ENCODE measurements at regions of chr10 and their contacts with region 1.

Region 1: GRCh38 chr10:110610308-110610774 is 33.8 kb upstream of the RBM20 start:
- DNase-seq: peak; percentile 50
- ATAC-seq: peak; percentile 74
- H3K4me3 Mint-ChIP-seq: no peak overlapping the region
- H3K27ac Mint-ChIP-seq: peak overlapping the region; percentile 1
- H3K4me1 Mint-ChIP-seq: peaks cover 22% of the 10 kb centered on the region
- H3K27me3 Mint-ChIP-seq: no peaks in the 10 kb centered on the region
- CTCF ChIP-seq: peak; percentile 71

Region 2: DNA sequence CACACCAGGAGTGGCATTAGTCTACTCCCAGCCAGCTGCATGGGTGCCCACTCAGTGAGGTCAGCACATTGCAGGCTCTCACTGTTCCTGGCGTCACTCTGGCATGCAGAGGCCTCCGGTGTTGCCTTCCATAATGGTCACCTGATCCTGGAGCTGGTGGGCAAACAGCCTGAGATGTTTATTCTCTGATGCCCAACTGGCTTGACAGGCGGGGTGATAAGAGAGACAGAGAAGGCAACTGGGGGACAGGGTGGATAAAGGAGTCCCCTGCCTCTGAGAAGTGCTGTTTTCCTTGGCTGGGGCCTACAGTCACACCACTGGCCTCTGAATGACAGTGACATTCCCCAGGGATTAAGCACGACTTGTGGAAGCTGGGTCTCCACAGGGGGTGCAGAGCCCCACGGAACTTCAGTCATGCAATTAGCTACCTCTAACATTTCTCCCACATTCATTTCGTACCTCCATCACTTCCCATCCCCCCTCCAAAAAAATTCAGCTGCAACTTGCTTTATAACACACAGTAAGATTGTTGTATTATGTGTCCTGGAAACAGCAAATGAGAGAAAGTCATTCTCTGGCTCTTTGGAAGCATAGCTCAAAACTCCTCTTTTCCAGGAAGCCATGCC is 26.7 kb after region 1 on chr10:
- CTCF ChIA-PET with region 1: interaction called, 11 read pairs
- POLR2A ChIA-PET with region 1: no interaction called
- DNase-seq: no peak
- ATAC-seq: peak; percentile 22
- H3K4me3 Mint-ChIP-seq: no peak overlapping the region
- H3K27ac Mint-ChIP-seq: no peak overlapping the region
- H3K4me1 Mint-ChIP-seq: peaks cover 31% of the 10 kb centered on the region
- H3K27me3 Mint-ChIP-seq: peaks cover 10% of the 10 kb centered on the region
- CTCF ChIP-seq: no peak

Region 3: GRCh38 chr10:110643653-110644597 is 33.6 kb after region 1 on chr10 and contains the start of gene RBM20:
- CTCF ChIA-PET with region 1: interaction called, 11 read pairs
- POLR2A ChIA-PET with region 1: no interaction called
- DNase-seq: peak; percentile 55
- ATAC-seq: peak; percentile 53
- H3K4me3 Mint-ChIP-seq: peak within 1 kb of the TSS; percentile 80
- H3K27ac Mint-ChIP-seq: no peak within 1 kb of the TSS
- H3K4me1 Mint-ChIP-seq: peaks cover 31% of the 10 kb centered on the region
- H3K27me3 Mint-ChIP-seq: peaks cover 55% of the 10 kb centered on the region
- CTCF ChIP-seq: no peak
- total RNA-seq, gene RBM20: 0.37 to 0.52 TPM (median 0.41 TPM) in 3 replicates

Region 4: GRCh38 chr10:110671788-110672579 is 61.6 kb after region 1 on chr10:
- CTCF ChIA-PET with region 1: interaction called, 18 read pairs
- POLR2A ChIA-PET with region 1: no interaction called
- DNase-seq: peak; percentile 80
- ATAC-seq: peak; percentile 85
- H3K4me3 Mint-ChIP-seq: peak overlapping the region; percentile 66
- H3K27ac Mint-ChIP-seq: no peak overlapping the region
- H3K4me1 Mint-ChIP-seq: peaks cover 26% of the 10 kb centered on the region
- H3K27me3 Mint-ChIP-seq: peaks cover 77% of the 10 kb centered on the region
- CTCF ChIP-seq: peak; percentile 34; the same call in 1 of the 2 replicates

Region 5: DNA sequence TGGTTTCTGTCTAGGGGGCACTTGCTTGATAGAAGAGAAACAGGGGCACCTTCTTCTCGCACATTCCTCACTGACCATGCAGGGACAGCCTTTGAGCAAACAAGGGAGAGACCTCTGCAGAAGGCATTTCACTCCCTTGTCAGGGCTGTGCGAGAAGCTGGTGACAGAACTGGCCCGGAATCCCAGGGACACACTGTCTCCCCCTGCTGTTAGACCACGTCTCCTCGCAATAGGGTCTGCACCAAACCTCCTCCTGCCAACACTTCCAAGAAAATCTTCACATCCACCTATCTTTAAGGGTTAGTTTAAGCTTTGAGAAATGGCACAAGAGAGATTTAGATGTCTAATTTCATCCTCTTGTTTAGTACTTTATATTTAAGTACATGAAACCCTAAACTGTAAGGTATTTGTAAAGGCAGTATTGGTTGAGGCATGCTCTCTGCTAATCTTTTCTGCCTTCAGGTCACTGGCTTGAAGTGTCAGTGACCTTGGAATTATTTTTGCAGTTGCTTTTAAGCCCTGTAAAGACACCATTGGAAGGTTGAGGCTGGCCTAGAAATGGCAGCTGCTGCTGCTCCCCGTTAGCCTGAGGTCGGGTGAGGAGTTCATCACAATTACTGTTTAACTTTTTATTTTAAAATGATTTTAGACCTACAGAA is 70.8 kb after region 1 on chr10:
- CTCF ChIA-PET with region 1: interaction called, 48 read pairs
- POLR2A ChIA-PET with region 1: interaction called, 4 read pairs
- DNase-seq: peak; percentile 65
- ATAC-seq: peak; percentile 90
- H3K4me3 Mint-ChIP-seq: no peak overlapping the region
- H3K27ac Mint-ChIP-seq: no peak overlapping the region
- H3K4me1 Mint-ChIP-seq: peaks cover 48% of the 10 kb centered on the region
- H3K27me3 Mint-ChIP-seq: no peaks in the 10 kb centered on the region
- CTCF ChIP-seq: peak; percentile 46; the same call in 1 of the 2 replicates